CD4-positive, alpha-beta T cell (primary cell): ENCODE measurements at regions of chr4 and their contacts with region 1.

Region 1: GRCh38 chr4:2761035-2761923 is 5.1 kb upstream of the TNIP2 start:
- DNase-seq: peak in 1 of 14 experiments; percentile 24
- ATAC-seq: no peak
- H3K4me3 ChIP-seq: no peak overlapping the region
- H3K4me3 Mint-ChIP-seq: peak overlapping the region; percentile 1
- H3K27ac ChIP-seq: no peak overlapping the region
- H3K27ac Mint-ChIP-seq: no peak overlapping the region
- H3K4me1 ChIP-seq: peaks cover 18% of the 10 kb centered on the region
- H3K4me1 Mint-ChIP-seq: peaks cover 8% of the 10 kb centered on the region
- H3K27me3 ChIP-seq: no peaks in the 10 kb centered on the region
- H3K27me3 Mint-ChIP-seq: no peaks in the 10 kb centered on the region
- CTCF ChIP-seq: no peak

Region 2: GRCh38 chr4:2354118-2354517 is 407.2 kb before region 1 on chr4:
- CTCF ChIA-PET with region 1: no interaction called
- POLR2A ChIA-PET with region 1: no interaction called
- intact Hi-C with region 1: no loop called
- DNase-seq: peak; percentile 14 to 65 (median 29)
- ATAC-seq: peak; percentile 77
- H3K4me3 ChIP-seq: no peak overlapping the region
- H3K4me3 Mint-ChIP-seq: no peak overlapping the region
- H3K27ac ChIP-seq: no peak overlapping the region
- H3K27ac Mint-ChIP-seq: peak overlapping the region; percentile 51
- H3K4me1 ChIP-seq: peaks cover 6% of the 10 kb centered on the region
- H3K4me1 Mint-ChIP-seq: peaks cover 6% of the 10 kb centered on the region
- H3K27me3 ChIP-seq: no peaks in the 10 kb centered on the region
- H3K27me3 Mint-ChIP-seq: no peaks in the 10 kb centered on the region
- CTCF ChIP-seq: peak; percentile 45

Region 3: DNA sequence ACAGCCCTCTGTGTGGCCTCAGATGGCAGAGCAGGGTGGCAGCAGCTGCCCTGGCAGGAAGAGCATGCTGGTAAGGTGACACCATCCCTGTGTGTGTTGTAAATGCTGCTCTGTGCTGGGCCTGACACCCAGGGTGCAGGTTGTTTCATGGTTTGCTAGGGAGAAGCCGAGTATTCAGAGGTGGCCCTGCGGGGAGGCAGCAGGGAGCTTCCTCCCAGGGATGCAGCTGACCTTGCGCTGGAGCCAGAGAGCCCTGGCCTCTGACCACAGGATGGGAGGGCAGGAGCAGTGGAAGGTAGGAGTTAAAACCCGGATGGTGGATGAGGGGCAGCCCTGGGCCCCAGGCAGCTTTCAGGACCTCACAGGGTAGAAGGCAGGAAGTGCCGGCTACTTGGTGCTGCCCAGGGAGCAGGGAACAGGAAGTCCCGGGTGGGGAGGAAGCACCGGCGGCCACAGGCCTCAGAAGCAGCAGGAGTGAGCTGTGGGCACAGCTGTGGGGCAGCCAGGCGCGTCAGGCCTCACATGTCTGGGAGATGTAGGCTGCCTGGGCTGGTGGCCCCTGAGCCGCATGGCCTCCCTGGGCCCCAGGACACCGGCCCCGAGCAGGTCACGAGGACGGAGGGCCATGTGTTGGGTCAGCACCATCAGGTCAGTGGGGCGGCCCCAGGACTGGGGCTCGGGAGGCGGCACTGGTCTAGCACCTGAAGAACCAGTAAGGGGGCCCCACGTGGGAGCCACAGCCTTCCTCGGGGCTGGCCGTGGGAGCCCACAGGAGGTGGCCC is 50.7 kb after region 1 on chr4:
- CTCF ChIA-PET with region 1: interaction called, 3 read pairs
- POLR2A ChIA-PET with region 1: interaction called, 3 read pairs
- intact Hi-C with region 1: loop called in 1 of 2 experiments (anchors 10 kb)
- DNase-seq: peak in 12 of 14 experiments; percentile 34 to 85 (median 54)
- ATAC-seq: peak; percentile 80
- H3K4me3 ChIP-seq: peak overlapping the region; percentile 77
- H3K4me3 Mint-ChIP-seq: peak overlapping the region; percentile 99
- H3K27ac ChIP-seq: peak overlapping the region; percentile 80 to 83
- H3K27ac Mint-ChIP-seq: peak overlapping the region; percentile 95
- H3K4me1 ChIP-seq: peaks cover 68% of the 10 kb centered on the region
- H3K4me1 Mint-ChIP-seq: peaks cover 56% of the 10 kb centered on the region
- H3K27me3 ChIP-seq: no peaks in the 10 kb centered on the region
- H3K27me3 Mint-ChIP-seq: no peaks in the 10 kb centered on the region
- CTCF ChIP-seq: no peak

Region 4: DNA sequence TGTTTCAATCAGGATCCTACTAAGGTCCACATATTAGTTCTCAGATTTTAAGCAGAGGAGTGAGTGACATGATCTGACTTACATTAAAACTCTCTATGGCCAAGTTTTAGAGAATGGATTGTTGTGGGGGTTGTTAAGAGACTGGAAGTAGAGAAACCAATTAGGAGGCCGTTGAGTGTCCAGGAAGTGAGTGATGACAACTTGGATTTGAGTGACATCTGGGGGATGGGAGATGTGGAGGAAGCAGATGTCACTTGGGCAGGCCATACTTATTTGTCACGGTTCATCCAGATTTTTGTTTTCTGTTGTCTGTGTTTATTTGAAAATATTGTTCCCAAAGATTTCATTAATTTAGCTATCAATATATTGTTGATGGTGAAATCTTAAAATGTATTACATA is 110.6 kb after region 1 on chr4:
- CTCF ChIA-PET with region 1: interaction called, 4 read pairs
- POLR2A ChIA-PET with region 1: no interaction called
- intact Hi-C with region 1: loop called in 1 of 2 experiments (anchors 5 kb)
- DNase-seq: peak in 4 of 14 experiments; percentile 8 to 48 (median 34)
- ATAC-seq: peak; percentile 51
- H3K4me3 ChIP-seq: no peak overlapping the region
- H3K4me3 Mint-ChIP-seq: no peak overlapping the region
- H3K27ac ChIP-seq: no peak overlapping the region
- H3K27ac Mint-ChIP-seq: peak overlapping the region; percentile 66
- H3K4me1 ChIP-seq: peaks cover 28% of the 10 kb centered on the region
- H3K4me1 Mint-ChIP-seq: peaks cover 72% of the 10 kb centered on the region
- H3K27me3 ChIP-seq: no peaks in the 10 kb centered on the region
- H3K27me3 Mint-ChIP-seq: no peaks in the 10 kb centered on the region
- CTCF ChIP-seq: no peak

Region 5: GRCh38 chr4:2954358-2955185 is 193.3 kb after region 1 on chr4:
- CTCF ChIA-PET with region 1: interaction called, 14 read pairs
- POLR2A ChIA-PET with region 1: interaction called, 3 read pairs
- intact Hi-C with region 1: loop called in 1 of 2 experiments (anchors 2 kb)
- DNase-seq: peak in 8 of 14 experiments; percentile 29 to 83 (median 55)
- ATAC-seq: peak; percentile 77
- H3K4me3 ChIP-seq: no peak overlapping the region
- H3K4me3 Mint-ChIP-seq: no peak overlapping the region
- H3K27ac ChIP-seq: peak overlapping the region; percentile 14 to 75
- H3K27ac Mint-ChIP-seq: peak overlapping the region; percentile 54
- H3K4me1 ChIP-seq: peaks cover 14% of the 10 kb centered on the region
- H3K4me1 Mint-ChIP-seq: peaks cover 46% of the 10 kb centered on the region
- H3K27me3 ChIP-seq: no peaks in the 10 kb centered on the region
- H3K27me3 Mint-ChIP-seq: no peaks in the 10 kb centered on the region
- CTCF ChIP-seq: peak; percentile 28